Left lung (tissue), 14 donors: ENCODE measurements at regions of chr14 and their contacts with region 1.

Region 1: DNA sequence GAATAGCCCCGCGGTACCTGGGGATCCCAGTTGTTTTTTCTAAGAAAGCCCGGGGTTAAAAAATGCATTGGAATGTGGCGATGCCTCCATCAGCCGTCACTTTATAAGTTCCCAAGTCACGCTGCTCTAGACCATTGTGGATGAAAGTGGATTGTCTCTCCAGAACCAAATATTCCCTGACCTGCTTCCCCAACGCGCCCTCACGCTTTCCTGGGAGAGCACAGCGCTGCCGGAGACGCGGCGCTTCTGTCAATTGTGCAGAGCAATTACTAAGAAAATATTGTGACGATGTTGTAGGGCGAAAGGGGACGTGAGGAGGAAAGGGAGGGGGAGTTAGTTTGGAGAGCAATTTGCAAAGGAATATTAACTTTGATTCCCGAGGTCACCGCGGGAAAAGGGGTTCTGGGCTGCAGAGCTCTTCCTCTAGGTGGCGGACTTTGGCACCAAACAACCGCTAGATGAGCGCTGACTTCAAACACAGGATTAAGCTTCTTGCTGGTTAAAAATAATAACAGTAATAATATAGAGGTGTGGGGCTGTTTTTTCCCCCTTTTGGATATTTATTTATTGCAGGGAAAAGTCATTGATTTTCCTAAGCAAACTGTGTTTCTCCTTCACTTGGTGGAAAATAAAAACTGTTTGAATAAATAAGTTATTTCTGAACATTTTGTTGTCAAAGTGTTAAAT is 9.6 kb upstream of the FOXG1 start:
- DNase-seq: peak in 1 of 4 donors; percentile 41
- ATAC-seq: peak; percentile 62
- H3K4me3 ChIP-seq: no peak overlapping the region
- H3K27ac ChIP-seq: no peak overlapping the region
- H3K4me1 ChIP-seq: no peaks in the 10 kb centered on the region
- H3K27me3 ChIP-seq: peaks cover 81 to 95% of the 10 kb centered on the region in 2 donors
- CTCF ChIP-seq: peak; percentile 27 to 32

Region 2: DNA sequence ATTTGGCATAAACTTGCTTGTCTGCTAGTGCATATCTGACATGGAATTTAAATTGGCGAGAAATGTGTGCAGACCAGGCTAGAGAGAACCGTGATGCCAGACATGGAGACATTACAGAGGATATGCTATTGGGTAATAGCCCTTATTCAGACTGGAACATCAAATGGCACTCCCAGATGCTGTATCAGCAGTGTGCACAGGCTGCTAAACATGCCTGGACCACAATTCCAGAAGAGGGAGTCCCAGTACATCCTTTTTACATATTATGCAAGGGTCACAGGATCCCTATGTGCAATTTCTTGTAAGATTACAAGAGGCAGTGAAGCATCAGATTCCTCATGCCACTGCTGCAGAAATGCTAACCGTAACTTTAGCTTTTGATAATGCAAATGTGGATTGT is 344.9 kb before region 1 on chr14:
- intact Hi-C with region 1: no loop called
- DNase-seq: no peak
- ATAC-seq: no peak
- H3K4me3 ChIP-seq: no peak overlapping the region
- H3K27ac ChIP-seq: no peak overlapping the region
- H3K4me1 ChIP-seq: no peaks in the 10 kb centered on the region
- H3K27me3 ChIP-seq: no peaks in the 10 kb centered on the region
- CTCF ChIP-seq: no peak

Region 3: DNA sequence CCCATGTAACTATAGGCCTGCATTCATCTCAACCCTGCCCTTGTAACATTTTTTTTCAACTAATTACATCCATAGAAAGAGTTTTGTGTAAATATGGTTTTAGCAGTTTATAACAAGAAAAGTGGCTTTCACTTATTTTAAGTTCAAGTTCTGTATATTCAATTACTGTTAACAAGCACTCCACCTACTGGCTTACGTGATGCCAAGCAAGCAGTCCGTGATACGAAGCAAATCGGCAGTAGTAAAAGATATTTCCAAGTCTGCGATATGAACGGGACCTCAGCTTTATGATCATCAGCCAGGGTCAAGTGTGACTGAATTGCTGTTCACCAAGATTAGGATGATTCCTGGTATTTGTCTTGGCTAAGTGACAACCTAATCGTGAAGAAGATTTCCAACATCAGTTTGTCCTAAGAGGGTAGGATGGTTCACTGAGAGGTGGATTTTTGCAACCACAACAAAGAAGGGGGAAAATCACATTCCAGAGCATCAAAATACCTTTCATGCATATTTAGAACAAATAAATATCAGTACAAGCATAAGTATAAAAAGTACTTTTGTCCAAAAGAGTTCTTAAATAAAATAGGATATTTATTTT is 465.7 kb after region 1 on chr14:
- intact Hi-C with region 1: loop called in 1 of 2 experiments (anchors 5 kb)
- DNase-seq: peak in 2 of 4 donors; percentile 19 to 43
- ATAC-seq: peak; percentile 53
- H3K4me3 ChIP-seq: no peak overlapping the region
- H3K27ac ChIP-seq: no peak overlapping the region
- H3K4me1 ChIP-seq: no peaks in the 10 kb centered on the region
- H3K27me3 ChIP-seq: peaks cover 0 to 7% of the 10 kb centered on the region in 2 donors
- CTCF ChIP-seq: peak in 1 of 2 donors; percentile 38